ENCODE measurements at regions of chr10 and their contacts with region 1.

Region 1: GRCh38 chr10:127196230-127196954 is at the start of gene INSYN2A:
- DNase-seq: peak; percentile 59
- H3K4me3 ChIP-seq: peak within 1 kb of the TSS; percentile 43 to 54 (median 50)
- H3K27ac ChIP-seq: no peak within 1 kb of the TSS
- H3K4me1 ChIP-seq: peaks cover 19% of the 10 kb centered on the region
- H3K27me3 ChIP-seq: no peaks in the 10 kb centered on the region
- CTCF ChIP-seq: peak in 1 of 2 donors; percentile 35
- total RNA-seq, gene INSYN2A: 0.07 to 0.17 TPM

Region 2: DNA sequence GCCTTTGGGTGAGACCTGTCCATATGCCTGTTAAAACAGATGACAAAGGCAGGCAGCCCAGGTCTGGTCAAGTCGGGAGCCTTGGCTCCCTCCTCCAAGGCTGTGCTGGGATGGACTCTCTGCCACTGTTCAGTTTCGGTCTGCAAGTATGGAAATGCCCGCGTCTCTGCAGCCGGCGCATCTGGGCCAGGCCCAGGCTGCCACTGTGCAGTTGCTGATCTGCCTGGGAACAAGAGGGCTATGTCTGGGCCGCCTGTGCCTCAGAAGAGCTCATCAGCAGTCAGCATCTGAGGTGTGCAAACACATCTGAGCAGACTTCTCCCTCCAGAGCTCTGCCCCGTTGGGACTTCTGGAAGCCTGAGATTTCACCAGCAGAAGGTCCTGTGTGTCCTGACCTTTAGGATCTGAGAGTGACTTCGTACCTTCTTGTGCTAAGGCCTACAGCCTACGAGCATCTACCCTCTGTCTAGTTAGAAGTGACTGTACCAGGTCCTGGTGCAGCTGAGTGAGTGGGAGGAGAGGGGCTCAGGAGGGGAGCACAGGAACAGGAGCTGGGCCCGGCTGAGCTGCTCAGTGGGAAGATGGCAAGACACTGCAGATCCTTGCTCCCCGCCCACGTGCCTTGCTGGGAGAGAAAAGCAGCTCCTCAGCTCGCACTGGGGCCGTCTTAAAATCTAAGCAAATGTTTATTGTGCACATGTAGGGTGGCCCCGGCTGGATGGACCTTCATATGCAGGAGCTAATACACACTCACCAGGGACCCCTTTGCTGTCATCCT is 240.3 kb before region 1 on chr10:
- CTCF ChIA-PET with region 1: no interaction called
- dilution Hi-C with region 1: no loop called
- in situ Hi-C with region 1: no loop called
- intact Hi-C with region 1: no loop called
- DNase-seq: no peak
- H3K4me3 ChIP-seq: no peak overlapping the region
- H3K27ac ChIP-seq: no peak overlapping the region
- H3K4me1 ChIP-seq: peaks cover 18% of the 10 kb centered on the region
- H3K27me3 ChIP-seq: no peaks in the 10 kb centered on the region
- CTCF ChIP-seq: no peak

Region 3: GRCh38 chr10:126993235-126993634 is 203.2 kb before region 1 on chr10:
- CTCF ChIA-PET with region 1: no interaction called
- dilution Hi-C with region 1: no loop called
- in situ Hi-C with region 1: no loop called
- intact Hi-C with region 1: no loop called
- DNase-seq: no peak
- H3K4me3 ChIP-seq: no peak overlapping the region
- H3K27ac ChIP-seq: no peak overlapping the region
- H3K4me1 ChIP-seq: no peaks in the 10 kb centered on the region
- H3K27me3 ChIP-seq: no peaks in the 10 kb centered on the region
- CTCF ChIP-seq: no peak

Region 4: GRCh38 chr10:127125331-127125730 is 71.1 kb before region 1 on chr10:
- CTCF ChIA-PET with region 1: no interaction called
- dilution Hi-C with region 1: no loop called
- in situ Hi-C with region 1: no loop called
- intact Hi-C with region 1: no loop called
- DNase-seq: no peak
- H3K4me3 ChIP-seq: no peak overlapping the region
- H3K27ac ChIP-seq: no peak overlapping the region
- H3K4me1 ChIP-seq: no peaks in the 10 kb centered on the region
- H3K27me3 ChIP-seq: no peaks in the 10 kb centered on the region
- CTCF ChIP-seq: no peak

Region 5: GRCh38 chr10:127148066-127148932 is 48.1 kb before region 1 on chr10:
- CTCF ChIA-PET with region 1: no interaction called
- dilution Hi-C with region 1: no loop called
- in situ Hi-C with region 1: no loop called
- intact Hi-C with region 1: loop called (anchors 2 kb)
- DNase-seq: peak; percentile 82
- H3K4me3 ChIP-seq: no peak overlapping the region
- H3K27ac ChIP-seq: peak overlapping the region; percentile 90
- H3K4me1 ChIP-seq: peaks cover 63% of the 10 kb centered on the region
- H3K27me3 ChIP-seq: no peaks in the 10 kb centered on the region
- CTCF ChIP-seq: no peak

Region 6: GRCh38 chr10:127278001-127278400 is 81.6 kb after region 1 on chr10:
- CTCF ChIA-PET with region 1: no interaction called
- dilution Hi-C with region 1: no loop called
- in situ Hi-C with region 1: no loop called
- intact Hi-C with region 1: no loop called
- DNase-seq: no peak
- H3K4me3 ChIP-seq: no peak overlapping the region
- H3K27ac ChIP-seq: no peak overlapping the region
- H3K4me1 ChIP-seq: no peaks in the 10 kb centered on the region
- H3K27me3 ChIP-seq: no peaks in the 10 kb centered on the region
- CTCF ChIP-seq: no peak